Activated naive CD4-positive, alpha-beta T cell treated with anti-CD3 and anti-CD28 coated beads for 36 hours (primary cell): ENCODE measurements at regions of chr12 and their contacts with region 1.

Region 1: GRCh38 chr12:109744986-109745942 is 31.6 kb downstream of the FAM222A start:
- DNase-seq: no peak
- H3K4me3 Mint-ChIP-seq: no peak overlapping the region
- H3K27ac Mint-ChIP-seq: no peak overlapping the region
- H3K4me1 Mint-ChIP-seq: no peaks in the 10 kb centered on the region
- H3K27me3 Mint-ChIP-seq: no peaks in the 10 kb centered on the region

Region 2: DNA sequence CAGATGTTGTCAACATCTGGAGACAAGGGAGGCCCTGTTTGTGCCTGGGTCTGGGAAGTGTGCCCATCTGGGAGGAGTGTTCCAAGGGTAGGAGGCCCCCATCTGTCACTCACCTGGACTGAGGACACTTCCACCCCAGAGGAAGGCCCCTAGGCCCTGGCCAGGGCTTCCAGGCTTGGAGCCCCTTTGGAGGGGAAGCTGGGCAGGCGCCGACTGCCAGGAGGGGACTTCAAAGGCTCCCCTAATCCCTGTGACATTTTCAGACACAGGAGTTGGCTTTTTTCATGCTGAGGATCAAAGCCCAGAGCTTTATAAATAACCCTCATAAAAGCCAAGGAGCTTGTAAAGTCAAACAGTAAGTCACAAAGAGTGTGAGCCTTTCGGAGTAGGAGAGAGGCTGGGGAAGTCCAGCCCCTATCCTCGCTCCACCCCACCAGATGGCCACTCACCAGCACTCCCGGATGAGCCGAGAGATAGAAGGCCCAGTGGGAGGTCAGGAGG is 49.3 kb before region 1 on chr12:
- CTCF ChIA-PET with region 1: interaction called, 10 read pairs
- intact Hi-C with region 1: no loop called
- DNase-seq: no peak
- H3K4me3 Mint-ChIP-seq: no peak overlapping the region
- H3K27ac Mint-ChIP-seq: no peak overlapping the region
- H3K4me1 Mint-ChIP-seq: no peaks in the 10 kb centered on the region
- H3K27me3 Mint-ChIP-seq: peaks cover 7% of the 10 kb centered on the region